Cardiac septum (tissue), 1 donor: ENCODE measurements at regions of chr17 and their contacts with region 1.

Region 1: GRCh38 chr17:76523084-76524037 is 14.1 kb downstream of the CYGB start:
- DNase-seq: peak; percentile 94

Region 2: DNA sequence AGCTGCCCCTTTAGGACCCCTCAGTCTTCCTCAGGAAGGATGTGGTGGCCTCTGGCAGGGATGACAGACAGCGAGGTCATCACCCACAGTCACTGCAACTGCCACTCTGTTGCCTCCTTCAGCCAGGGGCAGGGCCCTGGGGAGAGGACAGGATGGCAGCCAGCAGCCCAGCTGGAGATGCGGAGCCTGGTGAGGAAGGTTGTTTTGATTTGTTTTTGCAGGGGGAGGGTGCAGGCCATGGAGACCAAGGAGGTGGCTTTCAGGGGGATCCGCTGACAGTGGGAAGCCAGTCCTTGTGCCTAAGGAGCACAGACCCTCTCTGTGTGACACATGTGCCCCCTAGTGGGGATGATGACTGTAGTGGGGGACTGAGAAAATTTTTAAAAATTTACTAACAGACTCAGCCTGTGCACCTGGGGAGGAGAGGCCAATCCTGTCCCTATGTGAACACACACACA is 23.9 kb after region 1 on chr17:
- intact Hi-C with region 1: loop called (anchors 1 kb)
- DNase-seq: peak; percentile 76

Region 3: DNA sequence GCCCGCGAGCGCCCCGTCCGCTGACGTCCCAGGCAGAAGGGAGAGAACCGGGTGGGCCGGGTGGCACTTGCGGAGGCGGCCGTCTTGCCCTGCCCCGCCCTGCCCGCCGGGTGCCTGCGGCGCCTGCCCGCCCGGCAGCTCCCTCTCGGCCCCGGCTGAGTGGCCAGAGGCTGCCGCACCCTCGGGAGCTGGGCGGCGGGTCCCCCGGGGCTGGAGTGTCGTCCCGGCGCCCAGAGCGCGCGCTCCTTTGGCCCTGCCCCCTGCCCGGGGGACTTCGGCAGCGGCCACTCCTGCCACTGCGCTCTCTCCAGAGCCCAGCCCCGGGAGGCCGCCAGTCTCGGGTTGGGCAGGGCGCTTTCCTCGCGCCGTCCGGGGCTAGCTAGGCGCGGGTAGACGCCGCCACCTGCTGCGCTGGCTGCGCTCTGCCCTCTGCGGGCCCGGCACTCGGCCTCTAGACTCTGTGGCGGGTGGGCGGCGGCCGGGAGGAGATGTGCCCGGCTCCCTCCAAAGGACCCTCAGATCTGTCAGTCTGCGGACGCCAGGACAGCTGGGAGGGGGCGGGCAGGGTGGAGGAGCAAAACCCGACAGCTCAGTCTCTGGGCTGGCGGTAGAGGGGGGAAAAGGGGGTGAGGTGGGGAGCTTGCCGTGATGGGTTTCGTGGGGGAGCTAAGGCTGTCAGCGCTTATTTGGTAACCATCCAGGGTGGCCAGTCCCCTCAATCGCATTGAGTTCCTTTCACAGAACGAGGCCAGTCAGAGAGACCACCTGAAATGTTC is 62.6 kb after region 1 on chr17 and contains the start of gene ST6GALNAC2:
- intact Hi-C with region 1: loop called (anchors 5 kb)
- DNase-seq: peak; percentile 89
- total RNA-seq, gene ST6GALNAC2: 6.2 TPM

Region 4: GRCh38 chr17:76623271-76624146 is 100.1 kb after region 1 on chr17:
- intact Hi-C with region 1: loop called (anchors 2 kb)
- DNase-seq: peak; percentile 91